A549 (cell line): ENCODE measurements at regions of chr16 and their contacts with region 1.

Region 1: GRCh38 chr16:788394-789126 is at the start of gene CHTF18:
- DNase-seq: peak; percentile 86 to 92
- ATAC-seq: peak; percentile 51 to 75
- H3K4me3 ChIP-seq: peak within 1 kb of the TSS; percentile 93
- H3K27ac ChIP-seq: peak within 1 kb of the TSS; percentile 84 to 92
- H3K4me1 ChIP-seq: peaks cover 24% of the 10 kb centered on the region
- CTCF ChIP-seq: no peak
- EP300 ChIP-seq: no peak
- POLR2A ChIP-seq: peak; percentile 63
- RAD21 ChIP-seq: no peak
- polyA plus RNA-seq, gene CHTF18: 4.8 and 5.1 TPM in 2 replicates

Region 2: GRCh38 chr16:720990-721764 is 67.4 kb before region 1 on chr16 and contains the start of gene ANTKMT:
- CTCF ChIA-PET with region 1: interaction called, 169 read pairs
- POLR2A ChIA-PET with region 1: interaction called, 8 read pairs
- DNase-seq: peak; percentile 84 to 88
- ATAC-seq: peak; percentile 53 to 70
- H3K4me3 ChIP-seq: peak within 1 kb of the TSS; percentile 93
- H3K27ac ChIP-seq: peak within 1 kb of the TSS; percentile 98 to 99
- H3K4me1 ChIP-seq: peaks cover 49% of the 10 kb centered on the region
- CTCF ChIP-seq: no peak
- EP300 ChIP-seq: peak in 1 of 2 experiments; percentile 25; a peak in 1 of 5 replicates
- POLR2A ChIP-seq: peak; percentile 85
- RAD21 ChIP-seq: no peak
- polyA plus RNA-seq, gene ANTKMT: 10.9 and 11.9 TPM in 2 replicates

Region 3: DNA sequence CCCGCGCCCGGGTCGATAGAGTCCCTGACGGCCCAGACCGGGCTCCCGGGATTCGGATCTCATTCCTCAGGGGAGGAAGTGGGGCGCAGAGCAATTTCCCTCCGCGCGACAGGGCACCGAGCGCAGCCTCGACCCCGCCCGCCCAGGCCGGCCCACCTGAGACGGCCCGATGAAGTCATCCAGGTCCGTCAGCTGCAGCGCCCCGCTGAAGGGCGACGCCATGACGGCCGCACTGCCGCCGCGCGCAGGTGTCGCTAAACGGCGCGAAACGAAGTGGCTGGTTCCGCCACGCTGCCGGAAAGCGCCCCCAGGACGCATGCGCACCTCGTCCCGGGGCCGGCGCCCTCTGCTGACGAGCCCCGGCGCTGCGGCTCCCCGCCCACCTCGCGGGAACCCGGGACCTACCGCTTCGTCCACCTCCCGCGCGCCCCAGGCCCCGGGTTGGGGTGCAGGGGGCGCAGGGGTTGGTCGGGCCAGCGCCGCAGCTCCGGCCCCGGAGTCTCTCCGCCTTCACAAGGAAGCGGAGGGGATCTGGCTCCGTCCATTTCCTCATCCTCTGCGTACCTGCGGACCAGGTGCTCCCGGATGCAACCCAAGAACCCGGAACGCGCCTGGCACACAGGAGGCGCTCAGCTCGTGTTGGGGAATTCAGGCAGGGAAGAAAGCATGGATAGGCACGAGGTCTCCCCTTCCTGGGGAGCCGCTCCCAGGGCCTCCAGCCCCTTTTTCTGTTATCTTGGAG is 47.6 kb before region 1 on chr16 and contains the start of gene CIAO3:
- CTCF ChIA-PET with region 1: interaction called, 205 read pairs
- POLR2A ChIA-PET with region 1: no interaction called
- DNase-seq: peak; percentile 83 to 93
- ATAC-seq: peak; percentile 75 to 87
- H3K4me3 ChIP-seq: peak within 1 kb of the TSS; percentile 96
- H3K27ac ChIP-seq: peak within 1 kb of the TSS; percentile 95 to 96
- H3K4me1 ChIP-seq: peaks cover 6% of the 10 kb centered on the region; the same call in 2 of the 3 replicates
- CTCF ChIP-seq: peak; percentile 93
- EP300 ChIP-seq: no peak
- POLR2A ChIP-seq: peak; percentile 72
- RAD21 ChIP-seq: peak in 1 of 2 experiments; percentile 42; a peak in 2 of 5 replicates
- polyA plus RNA-seq, gene CIAO3: 17.4 and 19.3 TPM in 2 replicates

Region 4: GRCh38 chr16:754656-755055 is 33.9 kb before region 1 on chr16:
- CTCF ChIA-PET with region 1: interaction called, 105 read pairs
- POLR2A ChIA-PET with region 1: no interaction called
- DNase-seq: no peak
- ATAC-seq: no peak
- H3K4me3 ChIP-seq: no peak overlapping the region
- H3K27ac ChIP-seq: no peak overlapping the region
- H3K4me1 ChIP-seq: no peaks in the 10 kb centered on the region
- CTCF ChIP-seq: no peak
- EP300 ChIP-seq: no peak
- POLR2A ChIP-seq: no peak
- RAD21 ChIP-seq: no peak

Region 5: GRCh38 chr16:777826-778225 is 10.7 kb before region 1 on chr16:
- CTCF ChIA-PET with region 1: interaction called, 105 read pairs
- POLR2A ChIA-PET with region 1: interaction called, 3 read pairs
- DNase-seq: no peak
- ATAC-seq: peak; percentile 2 to 3; a peak in 3 of 6 replicates
- H3K4me3 ChIP-seq: no peak overlapping the region
- H3K27ac ChIP-seq: no peak overlapping the region
- H3K4me1 ChIP-seq: 0 out of 3 replicates have a peak, but pooled peaks cover 3% of the 10 kb centered on the region
- CTCF ChIP-seq: no peak
- EP300 ChIP-seq: no peak
- POLR2A ChIP-seq: no peak
- RAD21 ChIP-seq: no peak

Region 6: DNA sequence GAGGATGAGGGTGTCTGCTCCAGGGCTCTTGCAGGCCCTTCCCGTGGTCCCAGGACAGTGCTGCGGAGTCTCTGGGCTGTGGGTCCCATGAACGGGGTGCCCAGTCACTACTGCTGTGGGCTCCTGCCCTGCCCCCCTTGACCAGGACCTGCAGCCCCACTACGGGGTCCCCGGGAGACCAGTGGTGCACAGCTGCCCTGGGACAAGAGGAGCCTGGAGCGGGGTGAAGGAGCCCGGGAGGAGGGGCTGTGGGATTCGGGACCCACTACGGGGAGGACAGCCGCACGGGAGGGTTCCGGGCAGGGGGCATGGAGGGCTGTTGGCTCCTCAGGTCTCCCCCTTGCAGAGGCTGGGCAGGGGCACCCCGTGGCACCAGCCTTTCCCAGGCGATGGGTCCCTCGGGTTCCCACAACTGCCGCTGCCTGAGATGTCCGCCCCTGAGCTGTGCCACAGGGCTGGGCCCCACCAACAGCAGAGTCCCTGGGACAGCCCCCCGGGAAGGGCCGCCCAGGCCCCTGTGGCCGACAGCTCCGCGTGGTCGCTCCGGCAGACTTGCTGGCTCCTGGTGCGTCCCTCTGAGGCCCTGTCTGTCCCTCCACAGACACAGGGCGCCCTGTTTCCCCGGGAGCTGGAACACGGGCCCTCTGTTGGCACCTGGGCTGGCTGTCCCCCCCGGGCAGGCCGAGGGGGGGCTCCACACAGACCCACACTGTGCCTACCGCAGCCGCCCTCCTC is 64.1 kb after region 1 on chr16:
- CTCF ChIA-PET with region 1: no interaction called
- POLR2A ChIA-PET with region 1: no interaction called
- DNase-seq: no peak
- ATAC-seq: no peak
- H3K4me3 ChIP-seq: no peak overlapping the region
- H3K27ac ChIP-seq: no peak overlapping the region
- H3K4me1 ChIP-seq: no peaks in the 10 kb centered on the region
- CTCF ChIP-seq: no peak
- EP300 ChIP-seq: no peak
- POLR2A ChIP-seq: no peak
- RAD21 ChIP-seq: no peak